ENCODE measurements at regions of chr4 and their contacts with region 1.

Region 1: GRCh38 chr4:74473155-74473811 is 28.3 kb downstream of the AREG start:
- DNase-seq: no peak
- H3K4me3 ChIP-seq: no peak overlapping the region
- H3K27ac ChIP-seq: no peak overlapping the region
- H3K4me1 ChIP-seq: peaks cover 0 to 25% (median 5%) of the 10 kb centered on the region in 4 donors
- H3K27me3 ChIP-seq: no peaks in the 10 kb centered on the region
- CTCF ChIP-seq: no peak
- EP300 ChIP-seq: no peak
- POLR2A ChIP-seq: no peak

Region 2: GRCh38 chr4:72809208-72809607 is 1664.1 kb before region 1 on chr4:
- in situ Hi-C with region 1: no loop called
- intact Hi-C with region 1: loop called (anchors 10 kb)
- DNase-seq: no peak
- H3K4me3 ChIP-seq: no peak overlapping the region
- H3K27ac ChIP-seq: no peak overlapping the region
- H3K4me1 ChIP-seq: no peaks in the 10 kb centered on the region
- H3K27me3 ChIP-seq: no peaks in the 10 kb centered on the region
- CTCF ChIP-seq: no peak
- EP300 ChIP-seq: no peak
- POLR2A ChIP-seq: no peak

Region 3: DNA sequence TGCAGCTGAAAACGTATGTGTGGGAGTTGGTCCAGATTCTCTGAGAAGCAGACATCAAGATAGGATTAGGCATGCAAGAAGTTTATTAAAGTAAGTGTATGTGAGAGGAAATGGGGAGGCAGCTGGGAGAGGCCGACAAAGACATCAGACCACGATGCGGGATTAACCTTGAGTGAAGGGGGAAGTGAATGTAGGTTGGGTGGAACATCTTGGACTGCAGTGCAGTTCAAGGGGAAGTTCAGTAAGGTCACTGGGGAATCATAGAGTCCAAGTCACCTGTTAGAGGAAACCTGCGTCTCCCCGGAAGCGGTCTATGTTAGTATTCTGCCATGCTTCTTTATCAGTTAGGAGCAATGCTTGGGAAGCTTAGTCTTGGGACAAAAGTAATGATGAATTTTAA is 710.9 kb before region 1 on chr4:
- in situ Hi-C with region 1: no loop called
- intact Hi-C with region 1: no loop called
- DNase-seq: no peak
- H3K4me3 ChIP-seq: no peak overlapping the region
- H3K27ac ChIP-seq: no peak overlapping the region
- H3K4me1 ChIP-seq: no peaks in the 10 kb centered on the region
- H3K27me3 ChIP-seq: no peaks in the 10 kb centered on the region
- CTCF ChIP-seq: no peak
- EP300 ChIP-seq: no peak
- POLR2A ChIP-seq: no peak

Measured in transverse colon (tissue), 4 donors.